Endothelial cell of umbilical vein (primary cell): ENCODE measurements at regions of chr11 and their contacts with region 1.

Region 1: GRCh38 chr11:87421422-87421821 is 383.7 kb downstream of the TMEM135 start:
- DNase-seq: peak; percentile 91
- H3K4me3 ChIP-seq: no peak overlapping the region
- H3K27ac ChIP-seq: no peak overlapping the region
- H3K4me1 ChIP-seq: peaks cover 16% of the 10 kb centered on the region
- H3K27me3 ChIP-seq: no peaks in the 10 kb centered on the region
- CTCF ChIP-seq: peak; percentile 67 to 75
- POLR2A ChIP-seq: no peak

Region 2: GRCh38 chr11:86719781-86720463 is 701.5 kb before region 1 on chr11:
- CTCF ChIA-PET with region 1: no interaction called
- POLR2A ChIA-PET with region 1: no interaction called
- dilution Hi-C with region 1: no loop called
- intact Hi-C with region 1: no loop called
- DNase-seq: peak; percentile 87
- H3K4me3 ChIP-seq: no peak overlapping the region
- H3K27ac ChIP-seq: peak overlapping the region; percentile 87
- H3K4me1 ChIP-seq: peaks cover 31% of the 10 kb centered on the region
- H3K27me3 ChIP-seq: no peaks in the 10 kb centered on the region
- CTCF ChIP-seq: no peak
- POLR2A ChIP-seq: no peak

Region 3: DNA sequence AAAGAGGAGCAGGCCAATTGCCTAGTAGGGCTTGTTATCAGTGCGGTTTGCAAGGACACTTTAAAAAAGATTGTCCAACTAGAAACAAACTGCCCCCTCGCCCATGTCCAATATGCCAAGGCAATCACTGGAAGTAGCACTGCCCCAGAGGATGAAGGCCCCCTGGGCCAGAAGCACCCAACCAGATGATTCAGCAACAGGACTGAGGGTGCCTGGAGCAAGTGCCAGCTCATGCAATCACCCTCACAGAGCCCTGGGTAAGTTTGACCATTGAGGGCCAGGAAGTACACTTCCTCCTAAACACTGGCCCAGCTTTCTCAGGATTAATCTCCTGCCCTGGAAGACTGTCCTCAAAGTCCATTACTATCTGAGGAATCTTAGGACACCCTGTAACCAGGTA is 572.6 kb before region 1 on chr11:
- CTCF ChIA-PET with region 1: no interaction called
- POLR2A ChIA-PET with region 1: no interaction called
- dilution Hi-C with region 1: no loop called
- intact Hi-C with region 1: no loop called
- DNase-seq: no peak
- H3K4me3 ChIP-seq: no peak overlapping the region
- H3K27ac ChIP-seq: no peak overlapping the region
- H3K4me1 ChIP-seq: no peaks in the 10 kb centered on the region
- H3K27me3 ChIP-seq: no peaks in the 10 kb centered on the region
- CTCF ChIP-seq: no peak
- POLR2A ChIP-seq: no peak

Region 4: DNA sequence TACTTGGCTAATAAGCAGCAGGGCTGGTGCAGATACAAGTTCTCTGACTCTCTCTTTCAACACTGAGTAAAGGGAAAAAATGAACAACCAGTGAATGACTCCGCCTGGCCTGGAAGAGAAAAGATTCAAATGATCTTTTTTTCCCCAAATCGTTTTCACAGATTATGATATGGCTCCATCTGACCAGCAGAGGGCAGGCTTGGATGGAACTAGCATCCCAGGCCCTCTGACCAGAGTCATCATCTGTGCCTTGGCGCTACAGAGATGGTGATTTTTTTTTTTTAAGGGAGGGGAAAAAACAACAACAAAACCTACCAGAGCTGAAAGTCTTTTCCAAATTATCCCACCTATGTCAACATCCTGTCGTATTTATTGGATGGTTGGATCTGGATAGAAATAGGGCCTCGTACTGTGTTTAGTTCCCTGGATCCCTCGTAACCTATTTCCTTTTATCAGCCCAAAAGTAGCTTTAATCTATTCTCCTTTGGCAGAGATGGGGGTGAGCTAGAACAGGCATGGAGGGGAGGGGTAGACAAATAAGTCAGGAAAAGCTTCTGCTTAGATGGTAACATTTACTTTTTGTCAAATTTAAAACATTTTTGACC is 551.4 kb before region 1 on chr11:
- CTCF ChIA-PET with region 1: interaction called, 22 read pairs
- POLR2A ChIA-PET with region 1: no interaction called
- dilution Hi-C with region 1: no loop called
- intact Hi-C with region 1: loop called (anchors 2 kb)
- DNase-seq: peak; percentile 67
- H3K4me3 ChIP-seq: no peak overlapping the region
- H3K27ac ChIP-seq: peak overlapping the region; percentile 16
- H3K4me1 ChIP-seq: no peaks in the 10 kb centered on the region
- H3K27me3 ChIP-seq: no peaks in the 10 kb centered on the region
- CTCF ChIP-seq: peak; percentile 69 to 70
- POLR2A ChIP-seq: no peak

Region 5: GRCh38 chr11:87290304-87290922 is 131.0 kb before region 1 on chr11:
- CTCF ChIA-PET with region 1: interaction called, 12 read pairs
- POLR2A ChIA-PET with region 1: no interaction called
- dilution Hi-C with region 1: no loop called
- intact Hi-C with region 1: loop called (anchors 1 kb)
- DNase-seq: peak; percentile 75
- H3K4me3 ChIP-seq: no peak overlapping the region
- H3K27ac ChIP-seq: no peak overlapping the region
- H3K4me1 ChIP-seq: peaks cover 2% of the 10 kb centered on the region
- H3K27me3 ChIP-seq: no peaks in the 10 kb centered on the region
- CTCF ChIP-seq: peak in 1 of 2 donors; percentile 34
- POLR2A ChIP-seq: no peak

Region 6: GRCh38 chr11:87368858-87369480 is 52.5 kb before region 1 on chr11:
- CTCF ChIA-PET with region 1: interaction called, 104 read pairs
- POLR2A ChIA-PET with region 1: interaction called, 4 read pairs
- dilution Hi-C with region 1: no loop called
- intact Hi-C with region 1: loop called (anchors 1 kb)
- DNase-seq: peak; percentile 97
- H3K4me3 ChIP-seq: peak overlapping the region in 1 of 3 experiments; percentile 5
- H3K27ac ChIP-seq: peak overlapping the region; percentile 94
- H3K4me1 ChIP-seq: peaks cover 47% of the 10 kb centered on the region
- H3K27me3 ChIP-seq: no peaks in the 10 kb centered on the region
- CTCF ChIP-seq: no peak
- POLR2A ChIP-seq: peak; percentile 65

Region 7: DNA sequence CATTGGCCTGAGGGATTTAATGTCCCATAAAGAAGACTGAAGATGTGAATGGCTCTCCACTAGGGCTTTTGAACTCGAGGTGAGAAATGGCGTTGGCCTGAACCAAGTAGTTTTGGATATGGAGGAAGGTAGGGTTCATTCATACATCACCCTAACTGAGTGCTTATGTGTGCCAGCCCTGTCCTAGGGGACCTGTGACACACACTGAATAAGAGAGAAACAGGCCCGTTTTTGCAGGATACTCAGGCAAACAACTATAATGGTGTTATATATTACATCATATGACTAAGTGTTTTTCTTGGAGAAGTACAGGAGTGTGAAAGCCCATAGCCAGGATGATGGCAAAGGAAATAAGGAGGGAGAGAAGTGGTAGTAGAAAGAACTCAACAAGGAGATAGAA is 15.6 kb before region 1 on chr11:
- CTCF ChIA-PET with region 1: interaction called, 27 read pairs
- POLR2A ChIA-PET with region 1: no interaction called
- dilution Hi-C with region 1: no loop called
- intact Hi-C with region 1: no loop called
- DNase-seq: peak; percentile 39
- H3K4me3 ChIP-seq: no peak overlapping the region
- H3K27ac ChIP-seq: no peak overlapping the region
- H3K4me1 ChIP-seq: no peaks in the 10 kb centered on the region
- H3K27me3 ChIP-seq: no peaks in the 10 kb centered on the region
- CTCF ChIP-seq: no peak
- POLR2A ChIP-seq: no peak

Region 8: GRCh38 chr11:87437844-87438223 is 16.4 kb after region 1 on chr11:
- CTCF ChIA-PET with region 1: interaction called, 13 read pairs
- POLR2A ChIA-PET with region 1: no interaction called
- dilution Hi-C with region 1: no loop called
- intact Hi-C with region 1: no loop called
- DNase-seq: no peak
- H3K4me3 ChIP-seq: no peak overlapping the region
- H3K27ac ChIP-seq: no peak overlapping the region
- H3K4me1 ChIP-seq: no peaks in the 10 kb centered on the region
- H3K27me3 ChIP-seq: peaks cover 3 to 4% of the 10 kb centered on the region in 2 experiments
- CTCF ChIP-seq: no peak
- POLR2A ChIP-seq: no peak

Region 9: GRCh38 chr11:87491381-87491780 is 70.0 kb after region 1 on chr11:
- CTCF ChIA-PET with region 1: no interaction called
- POLR2A ChIA-PET with region 1: no interaction called
- dilution Hi-C with region 1: no loop called
- intact Hi-C with region 1: no loop called
- DNase-seq: no peak
- H3K4me3 ChIP-seq: no peak overlapping the region
- H3K27ac ChIP-seq: no peak overlapping the region
- H3K4me1 ChIP-seq: no peaks in the 10 kb centered on the region
- H3K27me3 ChIP-seq: no peaks in the 10 kb centered on the region
- CTCF ChIP-seq: no peak
- POLR2A ChIP-seq: no peak